Prostate gland (tissue), 2 donors: ENCODE measurements at regions of chr22 and their contacts with region 1.

Region 1: GRCh38 chr22:48393041-48393370 is 1434.7 kb downstream of the BRD1 start:
- DNase-seq: no peak
- H3K4me3 ChIP-seq: no peak overlapping the region
- H3K27ac ChIP-seq: no peak overlapping the region
- H3K4me1 ChIP-seq: no peaks in the 10 kb centered on the region
- H3K27me3 ChIP-seq: no peaks in the 10 kb centered on the region
- CTCF ChIP-seq: no peak
- POLR2A ChIP-seq: no peak

Region 2: GRCh38 chr22:48335442-48336115 is 57.4 kb before region 1 on chr22:
- intact Hi-C with region 1: loop called (anchors 10 kb)
- DNase-seq: no peak
- H3K4me3 ChIP-seq: no peak overlapping the region
- H3K27ac ChIP-seq: no peak overlapping the region
- H3K4me1 ChIP-seq: no peaks in the 10 kb centered on the region
- H3K27me3 ChIP-seq: peaks cover 2% of the 10 kb centered on the region
- CTCF ChIP-seq: no peak
- POLR2A ChIP-seq: no peak

Region 3: GRCh38 chr22:48347311-48347710 is 45.7 kb before region 1 on chr22:
- intact Hi-C with region 1: no loop called
- DNase-seq: peak; percentile 33
- H3K4me3 ChIP-seq: no peak overlapping the region
- H3K27ac ChIP-seq: no peak overlapping the region
- H3K4me1 ChIP-seq: no peaks in the 10 kb centered on the region
- H3K27me3 ChIP-seq: peaks cover 7% of the 10 kb centered on the region
- CTCF ChIP-seq: no peak
- POLR2A ChIP-seq: no peak